BJ (cell line): ENCODE measurements at regions of chr7 and their contacts with region 1.

Region 1: DNA sequence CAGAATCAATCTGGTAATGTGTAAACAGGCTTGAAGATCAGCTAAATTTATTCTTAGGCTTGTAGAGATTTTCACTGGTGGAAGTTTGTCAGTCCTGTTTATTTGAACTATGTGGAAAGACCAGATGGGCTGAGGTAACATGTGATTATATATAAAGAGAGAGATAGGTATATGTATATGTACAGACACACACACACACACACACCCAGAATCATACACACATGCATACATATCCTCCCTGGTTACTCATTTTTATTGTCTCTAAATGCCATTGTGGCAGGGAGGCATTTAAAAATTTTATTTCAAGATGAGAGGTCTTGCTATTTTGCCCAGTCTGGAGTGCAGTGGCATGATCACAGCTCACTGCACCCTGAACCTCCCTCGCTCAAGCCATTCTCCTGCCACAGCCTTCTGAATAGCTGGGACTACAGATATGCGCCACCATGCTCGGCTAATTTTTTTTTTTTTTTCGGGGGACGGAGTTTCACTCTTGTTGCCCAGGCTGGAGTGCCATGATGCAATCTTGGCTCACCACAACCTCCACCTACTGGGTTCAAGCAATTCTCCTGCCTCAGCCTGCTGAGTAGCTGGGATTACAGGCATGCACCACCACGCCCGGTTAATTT is 78.1 kb upstream of the CYTH3 start:
- DNase-seq: no peak
- H3K4me3 ChIP-seq: no peak overlapping the region
- H3K27me3 ChIP-seq: no peaks in the 10 kb centered on the region
- CTCF ChIP-seq: no peak

Region 2: GRCh38 chr7:6367701-6368211 is 17.2 kb after region 1 on chr7:
- CTCF ChIA-PET with region 1: interaction called, 4 read pairs
- POLR2A ChIA-PET with region 1: interaction called, 21 read pairs
- DNase-seq: no peak
- H3K4me3 ChIP-seq: no peak overlapping the region
- H3K27me3 ChIP-seq: no peaks in the 10 kb centered on the region
- CTCF ChIP-seq: no peak

Region 3: DNA sequence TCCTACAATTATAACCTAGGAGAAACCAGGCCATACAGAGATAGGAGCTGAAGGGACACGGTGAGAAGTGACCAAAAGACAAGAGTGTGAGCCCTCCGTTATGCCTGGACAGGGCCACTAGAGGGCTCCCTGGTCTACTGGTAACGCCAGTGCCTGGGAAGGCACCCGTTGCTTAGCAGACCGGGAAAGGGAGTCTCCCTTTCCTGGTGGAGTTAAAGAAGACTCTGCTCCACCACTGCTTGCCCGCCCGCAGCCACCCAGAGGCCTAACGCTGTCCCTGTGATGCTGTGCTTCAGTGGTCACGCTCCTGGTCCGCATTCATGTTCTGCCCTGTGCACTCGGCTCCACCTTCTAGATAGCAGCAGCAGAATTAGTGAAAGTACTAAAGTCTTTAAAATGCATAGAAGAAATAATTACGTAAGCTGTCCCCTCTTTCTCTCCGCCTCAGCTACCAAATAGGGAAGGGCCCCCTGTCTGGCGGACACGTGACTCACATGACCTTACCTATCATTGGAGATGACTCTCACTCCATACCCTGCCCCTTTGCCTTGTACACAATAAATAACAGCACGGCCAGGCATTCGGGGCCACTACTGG is 165.9 kb after region 1 on chr7:
- CTCF ChIA-PET with region 1: no interaction called
- POLR2A ChIA-PET with region 1: no interaction called
- DNase-seq: peak; percentile 19
- H3K4me3 ChIP-seq: no peak overlapping the region
- H3K27me3 ChIP-seq: peaks cover 1% of the 10 kb centered on the region; the same call in 1 of the 2 replicates
- CTCF ChIP-seq: peak; percentile 90